ENCODE measurements at regions of chr4 and their contacts with region 1.

Region 1: GRCh38 chr4:55321707-55322264 is 24.3 kb upstream of the SRD5A3 start:
- DNase-seq: peak; percentile 91
- H3K4me3 Mint-ChIP-seq: no peak overlapping the region
- H3K27ac Mint-ChIP-seq: no peak overlapping the region
- H3K4me1 Mint-ChIP-seq: peaks cover 14% of the 10 kb centered on the region
- H3K27me3 Mint-ChIP-seq: no peaks in the 10 kb centered on the region
- CTCF ChIP-seq: peak; percentile 63

Region 2: DNA sequence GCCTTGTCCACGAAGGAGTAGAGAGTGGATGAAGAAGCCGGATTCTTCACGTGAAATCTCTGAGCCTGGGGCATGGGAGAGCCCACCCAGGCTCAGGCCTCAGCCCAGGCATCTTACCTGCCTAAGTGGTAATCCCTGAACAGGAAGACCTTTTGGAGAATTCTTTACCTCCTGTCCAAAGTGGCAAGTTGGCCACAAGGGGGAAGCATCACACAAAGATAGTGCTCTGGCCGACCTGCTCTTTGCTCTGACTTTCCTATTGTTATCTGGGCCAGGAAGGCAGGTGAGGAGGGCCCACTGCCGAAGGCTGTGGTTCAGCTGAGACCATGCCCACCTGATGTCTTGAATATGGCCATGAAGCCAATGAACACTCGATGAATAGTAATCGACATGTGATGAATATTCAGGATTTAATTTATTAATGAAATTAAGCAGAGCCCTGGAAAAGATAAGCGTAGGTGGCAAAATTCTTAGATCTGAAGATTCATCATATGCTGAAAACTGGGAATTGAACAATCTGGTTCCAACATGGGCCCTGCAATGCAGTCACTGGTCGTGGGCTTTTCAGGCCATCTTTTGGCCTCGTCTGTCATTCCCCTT is 998.9 kb before region 1 on chr4:
- CTCF ChIA-PET with region 1: interaction called, 4 read pairs
- POLR2A ChIA-PET with region 1: no interaction called
- intact Hi-C with region 1: loop called (anchors 5 kb)
- DNase-seq: peak; percentile 85
- H3K4me3 Mint-ChIP-seq: no peak overlapping the region
- H3K27ac Mint-ChIP-seq: no peak overlapping the region
- H3K4me1 Mint-ChIP-seq: no peaks in the 10 kb centered on the region
- H3K27me3 Mint-ChIP-seq: no peaks in the 10 kb centered on the region
- CTCF ChIP-seq: peak; percentile 85

Region 3: GRCh38 chr4:54971474-54971950 is 350.3 kb before region 1 on chr4:
- CTCF ChIA-PET with region 1: interaction called, 113 read pairs
- POLR2A ChIA-PET with region 1: interaction called, 13 read pairs
- intact Hi-C with region 1: loop called (anchors 1 kb)
- DNase-seq: peak; percentile 63
- H3K4me3 Mint-ChIP-seq: no peak overlapping the region
- H3K27ac Mint-ChIP-seq: peak overlapping the region; percentile 78
- H3K4me1 Mint-ChIP-seq: peaks cover 6% of the 10 kb centered on the region
- H3K27me3 Mint-ChIP-seq: no peaks in the 10 kb centered on the region
- CTCF ChIP-seq: peak; percentile 65

Region 4: GRCh38 chr4:54999003-54999402 is 322.8 kb before region 1 on chr4:
- CTCF ChIA-PET with region 1: interaction called, 58 read pairs
- POLR2A ChIA-PET with region 1: interaction called, 6 read pairs
- intact Hi-C with region 1: loop called (anchors 1 kb)
- DNase-seq: peak; percentile 47
- H3K4me3 Mint-ChIP-seq: no peak overlapping the region
- H3K27ac Mint-ChIP-seq: no peak overlapping the region
- H3K4me1 Mint-ChIP-seq: peaks cover 26% of the 10 kb centered on the region
- H3K27me3 Mint-ChIP-seq: no peaks in the 10 kb centered on the region
- CTCF ChIP-seq: peak; percentile 47

Region 5: GRCh38 chr4:55175779-55176231 is 146.0 kb before region 1 on chr4:
- CTCF ChIA-PET with region 1: interaction called, 3 read pairs
- POLR2A ChIA-PET with region 1: interaction called, 4 read pairs
- intact Hi-C with region 1: loop called (anchors 5 kb)
- DNase-seq: peak; percentile 47
- H3K4me3 Mint-ChIP-seq: no peak overlapping the region
- H3K27ac Mint-ChIP-seq: peak overlapping the region; percentile 63
- H3K4me1 Mint-ChIP-seq: peaks cover 30% of the 10 kb centered on the region
- H3K27me3 Mint-ChIP-seq: no peaks in the 10 kb centered on the region
- CTCF ChIP-seq: no peak

Region 6: GRCh38 chr4:55303818-55304217 is 18.0 kb before region 1 on chr4:
- CTCF ChIA-PET with region 1: interaction called, 11 read pairs
- POLR2A ChIA-PET with region 1: interaction called, 3 read pairs
- intact Hi-C with region 1: no loop called
- DNase-seq: peak; percentile 43
- H3K4me3 Mint-ChIP-seq: no peak overlapping the region
- H3K27ac Mint-ChIP-seq: peak overlapping the region; percentile 74
- H3K4me1 Mint-ChIP-seq: peaks cover 14% of the 10 kb centered on the region
- H3K27me3 Mint-ChIP-seq: no peaks in the 10 kb centered on the region
- CTCF ChIP-seq: no peak

Region 7: DNA sequence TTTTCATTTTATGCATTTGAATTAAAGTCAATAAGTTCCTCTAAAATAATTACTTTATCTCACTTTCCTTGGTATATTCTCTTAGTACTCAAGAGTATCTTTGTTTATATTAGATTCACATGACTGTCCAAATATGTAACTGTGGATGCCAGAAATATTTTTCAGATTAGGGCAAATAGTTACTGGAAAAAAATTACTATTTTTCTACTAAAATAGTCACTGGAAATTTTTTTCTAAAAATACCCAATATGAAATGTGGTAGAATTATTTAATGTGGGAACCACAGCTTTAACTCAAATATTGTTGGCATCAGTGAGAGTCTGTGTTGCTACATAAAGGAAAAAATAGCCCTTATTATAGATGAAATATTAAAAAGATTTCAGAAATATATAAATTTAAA is 384.8 kb after region 1 on chr4:
- CTCF ChIA-PET with region 1: no interaction called
- POLR2A ChIA-PET with region 1: no interaction called
- intact Hi-C with region 1: no loop called
- DNase-seq: no peak
- H3K4me3 Mint-ChIP-seq: no peak overlapping the region
- H3K27ac Mint-ChIP-seq: no peak overlapping the region
- H3K4me1 Mint-ChIP-seq: no peaks in the 10 kb centered on the region
- H3K27me3 Mint-ChIP-seq: no peaks in the 10 kb centered on the region
- CTCF ChIP-seq: no peak

Measured in MCF 10A (cell line).